ENCODE measurements at regions of chr7 and their contacts with region 1.

Region 1: DNA sequence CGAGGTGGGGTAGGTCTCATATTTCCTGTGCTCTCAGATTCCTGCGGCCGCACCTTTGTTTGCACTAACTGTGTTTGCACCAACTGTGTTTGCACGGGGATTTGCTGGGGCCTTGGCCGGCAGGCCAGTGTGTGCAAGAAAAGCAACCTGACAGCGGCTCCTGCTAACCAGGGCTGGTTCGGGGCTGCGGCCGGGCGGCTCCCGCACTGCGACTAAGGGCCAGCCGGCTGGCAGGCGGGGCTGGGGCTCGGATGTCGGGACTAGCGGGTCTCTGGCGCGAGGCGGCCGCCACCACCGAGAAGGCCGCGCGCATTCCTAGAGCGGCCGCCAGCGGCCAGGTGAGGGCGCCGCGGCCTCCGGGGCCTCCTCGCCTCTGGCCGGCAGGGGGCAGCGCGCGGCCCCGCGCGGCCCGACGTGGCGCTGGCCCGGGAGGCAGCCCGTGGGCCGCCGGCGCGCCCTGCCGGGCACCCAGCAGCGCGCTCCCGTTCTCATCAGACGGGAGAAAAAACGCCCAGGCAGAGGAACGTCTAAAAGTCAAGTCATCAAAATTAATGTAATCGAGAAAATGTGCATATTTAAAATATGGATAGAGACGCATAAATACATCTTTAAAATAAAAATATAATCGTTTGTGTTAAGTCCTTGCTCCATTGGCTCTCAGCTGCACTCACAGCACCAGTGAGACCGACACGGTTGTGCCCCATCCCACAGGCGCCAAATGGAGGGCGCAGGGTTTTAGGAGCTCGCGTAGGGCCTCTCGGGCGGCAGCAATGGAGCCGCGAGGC is 38.5 kb downstream of the ZNF777 start:
- DNase-seq: peak; percentile 69 to 90
- H3K4me3 ChIP-seq: peak overlapping the region; percentile 69
- H3K27ac ChIP-seq: no peak overlapping the region
- H3K4me1 ChIP-seq: no peaks in the 10 kb centered on the region
- H3K27me3 ChIP-seq: no peaks in the 10 kb centered on the region
- CTCF ChIP-seq: peak; percentile 43

Region 2: GRCh38 chr7:149261829-149262617 is 160.3 kb before region 1 on chr7 and contains the start of gene ZNF783:
- CTCF ChIA-PET with region 1: interaction called, 9 read pairs
- POLR2A ChIA-PET with region 1: no interaction called
- intact Hi-C with region 1: loop called (anchors 1 kb)
- DNase-seq: peak; percentile 74 to 90
- H3K4me3 ChIP-seq: peak within 1 kb of the TSS; percentile 89
- H3K27ac ChIP-seq: peak within 1 kb of the TSS; percentile 74
- H3K4me1 ChIP-seq: peaks cover 16% of the 10 kb centered on the region; the same call in 1 of the 2 replicates
- H3K27me3 ChIP-seq: no peaks in the 10 kb centered on the region
- CTCF ChIP-seq: peak; percentile 68
- total RNA-seq, gene ZNF783: 15.8 and 22.2 TPM in 2 replicates

Region 3: GRCh38 chr7:149284850-149285626 is 137.3 kb before region 1 on chr7:
- CTCF ChIA-PET with region 1: no interaction called
- POLR2A ChIA-PET with region 1: no interaction called
- intact Hi-C with region 1: loop called (anchors 1 kb)
- DNase-seq: peak; percentile 90 to 100
- H3K4me3 ChIP-seq: peak overlapping the region; percentile 62
- H3K27ac ChIP-seq: no peak overlapping the region
- H3K4me1 ChIP-seq: peaks cover 25% of the 10 kb centered on the region
- H3K27me3 ChIP-seq: no peaks in the 10 kb centered on the region
- CTCF ChIP-seq: no peak

Region 4: GRCh38 chr7:149310113-149310836 is 112.0 kb before region 1 on chr7:
- CTCF ChIA-PET with region 1: interaction called, 5 read pairs
- POLR2A ChIA-PET with region 1: no interaction called
- intact Hi-C with region 1: loop called (anchors 1 kb)
- DNase-seq: peak; percentile 36 to 78
- H3K4me3 ChIP-seq: no peak overlapping the region
- H3K27ac ChIP-seq: no peak overlapping the region
- H3K4me1 ChIP-seq: no peaks in the 10 kb centered on the region
- H3K27me3 ChIP-seq: no peaks in the 10 kb centered on the region
- CTCF ChIP-seq: peak; percentile 77

Region 5: GRCh38 chr7:149330914-149331567 is 91.3 kb before region 1 on chr7:
- CTCF ChIA-PET with region 1: no interaction called
- POLR2A ChIA-PET with region 1: no interaction called
- intact Hi-C with region 1: loop called (anchors 1 kb)
- DNase-seq: peak; percentile 44 to 53
- H3K4me3 ChIP-seq: no peak overlapping the region
- H3K27ac ChIP-seq: no peak overlapping the region
- H3K4me1 ChIP-seq: peaks cover 12% of the 10 kb centered on the region
- H3K27me3 ChIP-seq: no peaks in the 10 kb centered on the region
- CTCF ChIP-seq: no peak

Region 6: DNA sequence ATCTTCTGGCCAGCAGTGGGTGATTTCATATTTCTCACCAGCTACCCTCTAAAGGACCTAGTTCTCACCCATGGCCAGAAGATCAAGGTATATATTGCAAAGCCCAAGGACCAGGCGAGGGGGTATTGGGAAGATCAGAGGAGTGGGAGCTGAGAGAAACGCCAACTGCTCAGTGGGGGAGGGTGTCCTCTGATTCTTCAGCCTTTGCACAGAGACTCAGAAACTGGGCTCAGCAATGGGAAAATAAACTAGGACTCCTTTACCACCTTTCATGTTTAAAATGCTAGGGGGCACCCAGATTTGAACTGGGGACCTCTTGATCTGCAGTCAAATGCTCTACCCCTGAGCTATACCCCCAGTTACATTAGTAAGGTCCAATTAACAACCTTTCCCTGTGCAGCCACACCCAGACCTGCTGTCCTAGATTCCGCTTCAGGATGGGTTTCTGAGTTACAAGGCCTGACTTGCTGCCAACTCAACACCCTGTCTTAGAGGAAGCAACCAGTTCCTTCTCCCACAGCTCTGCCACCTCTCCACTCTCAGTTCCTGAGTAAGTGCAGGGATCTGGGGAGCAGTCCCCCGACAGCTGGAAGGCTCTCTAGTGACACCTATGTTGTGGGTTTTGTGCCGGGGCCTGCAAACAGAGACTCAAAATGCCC is 66.8 kb before region 1 on chr7:
- CTCF ChIA-PET with region 1: no interaction called
- POLR2A ChIA-PET with region 1: no interaction called
- intact Hi-C with region 1: loop called (anchors 1 kb)
- DNase-seq: peak; percentile 93 to 95
- H3K4me3 ChIP-seq: peak overlapping the region; percentile 38; the same call in 1 of the 2 replicates
- H3K27ac ChIP-seq: peak overlapping the region; percentile 58
- H3K4me1 ChIP-seq: peaks cover 23% of the 10 kb centered on the region
- H3K27me3 ChIP-seq: no peaks in the 10 kb centered on the region
- CTCF ChIP-seq: peak; percentile 53; the same call in 1 of the 2 replicates

Region 7: GRCh38 chr7:149381245-149381644 is 41.1 kb before region 1 on chr7:
- CTCF ChIA-PET with region 1: no interaction called
- POLR2A ChIA-PET with region 1: interaction called, 18 read pairs
- intact Hi-C with region 1: no loop called
- DNase-seq: peak in 1 of 2 experiments; percentile 53
- H3K4me3 ChIP-seq: no peak overlapping the region
- H3K27ac ChIP-seq: no peak overlapping the region
- H3K4me1 ChIP-seq: peaks cover 12% of the 10 kb centered on the region
- H3K27me3 ChIP-seq: no peaks in the 10 kb centered on the region
- CTCF ChIP-seq: peak; percentile 63

Measured in PC-9 (cell line).